Activated CD8-positive, alpha-beta T cell treated with anti-CD3 and anti-CD28 coated beads for 36 hours (primary cell): ENCODE measurements at regions of chr9 and their contacts with region 1.

Region 1: DNA sequence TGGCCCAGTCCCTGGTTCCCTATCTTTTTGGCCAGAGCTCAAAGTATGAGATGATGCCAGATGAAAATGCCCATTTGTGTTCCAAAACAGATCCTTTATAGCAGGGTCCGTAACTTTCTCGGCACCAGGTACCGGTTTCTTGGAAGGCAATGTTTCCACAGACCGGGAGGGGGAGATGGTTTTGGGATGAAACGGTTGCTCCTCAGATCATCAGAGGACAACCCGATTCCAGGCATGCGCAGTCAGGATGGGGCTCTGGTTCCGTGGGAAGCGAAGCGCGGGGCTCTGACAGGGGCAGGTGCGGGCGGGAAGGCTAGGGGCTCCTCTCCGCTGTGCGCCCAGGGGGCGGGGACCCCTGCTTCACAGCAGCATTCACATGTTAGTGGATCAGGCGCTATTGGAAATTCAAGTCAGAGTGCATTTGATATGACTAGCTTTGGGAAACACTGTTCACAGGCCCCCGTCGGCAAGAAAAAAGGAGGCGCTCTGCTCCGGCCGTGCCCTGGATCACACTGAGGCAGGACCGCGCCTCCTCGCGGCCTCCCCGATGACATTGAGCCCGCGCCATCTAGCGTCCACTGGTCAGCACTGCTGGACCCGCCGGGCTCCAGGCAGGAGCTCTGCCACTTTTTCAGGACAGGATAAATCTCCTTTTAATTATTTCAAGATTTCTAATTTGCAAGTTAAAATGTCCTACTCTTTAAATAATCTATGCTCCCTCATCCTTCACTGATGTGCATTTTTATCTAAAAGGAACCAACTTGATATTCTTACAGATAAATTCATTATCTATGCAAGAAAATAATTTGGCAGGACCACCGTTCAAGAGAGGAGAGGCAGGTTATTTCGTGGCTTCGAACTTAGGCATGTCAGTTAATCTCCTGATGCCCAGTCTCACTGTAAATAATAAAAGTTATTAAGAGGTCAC is 190.0 kb downstream of the FANCC start:
- DNase-seq: peak; percentile 84
- ATAC-seq: peak; percentile 98
- H3K4me3 Mint-ChIP-seq: no peak overlapping the region
- H3K27ac Mint-ChIP-seq: no peak overlapping the region
- H3K4me1 Mint-ChIP-seq: no peaks in the 10 kb centered on the region
- H3K27me3 Mint-ChIP-seq: no peaks in the 10 kb centered on the region
- CTCF ChIP-seq: peak; percentile 94

Region 2: DNA sequence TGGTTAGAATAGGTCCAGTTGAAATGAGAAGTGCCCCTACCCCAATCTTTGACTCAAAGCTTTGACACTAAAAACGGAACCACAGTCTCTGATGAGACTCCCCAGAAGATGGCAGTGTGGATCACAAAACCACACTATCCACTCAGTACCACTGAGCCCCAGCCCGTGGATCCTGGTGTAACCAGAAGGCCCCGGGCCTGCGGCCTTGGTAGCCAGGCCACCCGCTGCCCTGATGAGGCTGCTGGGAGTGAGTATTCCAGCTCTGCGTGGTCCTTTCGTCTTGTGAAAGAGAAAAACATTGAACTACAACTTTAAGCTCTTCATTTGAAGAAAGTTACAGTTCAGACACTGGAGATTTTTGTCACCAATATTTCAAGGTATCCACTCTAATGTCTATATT is 446.0 kb before region 1 on chr9:
- CTCF ChIA-PET with region 1: interaction called, 193 read pairs
- POLR2A ChIA-PET with region 1: interaction called, 3 read pairs
- intact Hi-C with region 1: loop called (anchors 5 kb)
- DNase-seq: peak; percentile 65
- ATAC-seq: peak; percentile 80
- H3K4me3 Mint-ChIP-seq: no peak overlapping the region
- H3K27ac Mint-ChIP-seq: no peak overlapping the region
- H3K4me1 Mint-ChIP-seq: no peaks in the 10 kb centered on the region
- H3K27me3 Mint-ChIP-seq: peaks cover 18% of the 10 kb centered on the region
- CTCF ChIP-seq: peak; percentile 76

Region 3: GRCh38 chr9:95116003-95116807 is 11.3 kb before region 1 on chr9:
- CTCF ChIA-PET with region 1: interaction called, 18 read pairs
- POLR2A ChIA-PET with region 1: interaction called, 3 read pairs
- intact Hi-C with region 1: no loop called
- DNase-seq: no peak
- ATAC-seq: no peak
- H3K4me3 Mint-ChIP-seq: no peak overlapping the region
- H3K27ac Mint-ChIP-seq: no peak overlapping the region
- H3K4me1 Mint-ChIP-seq: no peaks in the 10 kb centered on the region
- H3K27me3 Mint-ChIP-seq: no peaks in the 10 kb centered on the region
- CTCF ChIP-seq: no peak

Region 4: DNA sequence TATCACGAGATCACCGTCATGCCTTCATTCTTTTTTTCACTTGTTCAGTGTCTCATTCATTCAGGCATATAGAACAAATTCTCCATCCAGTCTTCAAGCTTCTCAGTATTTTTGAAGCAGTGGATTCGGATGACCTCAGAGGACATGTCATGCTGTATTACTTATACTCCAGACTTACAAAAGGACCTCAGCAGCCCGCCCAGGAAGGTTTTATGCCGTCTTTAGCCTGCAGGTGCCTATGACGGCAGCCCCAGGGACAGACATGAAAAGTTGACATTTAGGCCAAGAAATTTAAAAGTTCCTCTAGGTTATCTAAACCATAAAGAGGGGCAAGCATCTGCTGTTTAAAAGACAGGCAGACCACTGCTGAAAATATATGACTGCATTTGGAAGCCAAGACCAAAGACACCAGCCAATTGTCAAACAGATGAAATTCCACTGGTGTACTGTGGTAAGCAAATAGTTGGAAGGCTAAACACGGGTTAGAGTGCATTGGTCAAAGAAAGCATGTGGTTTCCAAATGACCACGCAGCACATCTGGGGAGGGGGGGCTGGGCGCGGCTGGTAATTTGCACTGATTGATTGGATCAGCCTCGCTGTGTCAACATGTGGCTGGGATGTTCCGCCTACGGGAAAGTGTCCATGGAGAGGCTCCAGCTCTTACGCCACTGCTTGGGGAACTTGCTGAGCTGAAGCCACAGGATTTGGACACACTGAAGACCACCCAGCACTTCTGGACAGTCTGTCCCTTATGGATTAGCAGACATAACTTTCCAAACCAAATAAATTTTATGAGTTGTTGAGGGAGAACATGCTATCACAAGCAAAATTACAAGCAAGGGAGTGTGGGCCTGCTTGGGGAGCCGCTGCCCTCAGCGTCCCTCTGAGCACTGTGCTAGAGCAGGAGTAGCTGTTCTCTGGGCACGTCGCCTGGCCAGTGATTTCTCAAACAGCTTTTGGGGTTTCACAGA is 16.4 kb after region 1 on chr9:
- CTCF ChIA-PET with region 1: interaction called, 18 read pairs
- POLR2A ChIA-PET with region 1: no interaction called
- intact Hi-C with region 1: no loop called
- DNase-seq: no peak
- ATAC-seq: no peak
- H3K4me3 Mint-ChIP-seq: no peak overlapping the region
- H3K27ac Mint-ChIP-seq: no peak overlapping the region
- H3K4me1 Mint-ChIP-seq: no peaks in the 10 kb centered on the region
- H3K27me3 Mint-ChIP-seq: no peaks in the 10 kb centered on the region
- CTCF ChIP-seq: no peak

Region 5: GRCh38 chr9:95167998-95168397 is 40.5 kb after region 1 on chr9:
- CTCF ChIA-PET with region 1: interaction called, 11 read pairs
- POLR2A ChIA-PET with region 1: no interaction called
- intact Hi-C with region 1: no loop called
- DNase-seq: peak; percentile 77
- ATAC-seq: peak; percentile 83
- H3K4me3 Mint-ChIP-seq: no peak overlapping the region
- H3K27ac Mint-ChIP-seq: no peak overlapping the region
- H3K4me1 Mint-ChIP-seq: peaks cover 18% of the 10 kb centered on the region
- H3K27me3 Mint-ChIP-seq: no peaks in the 10 kb centered on the region
- CTCF ChIP-seq: peak; percentile 85